Activated CD4-positive, alpha-beta memory T cell treated with anti-CD3 and anti-CD28 coated beads, Interleukin-2, amount 10 ng/mL, durations not matched to agents 7 days and 5 days (primary cell): ENCODE measurements at regions of chr1 and their contacts with region 1.

Region 1: GRCh38 chr1:148334339-148335130 is 148.6 kb downstream of the PPIAL4G start:
- DNase-seq: peak; percentile 81
- H3K4me3 Mint-ChIP-seq: peak overlapping the region; percentile 90
- H3K27ac Mint-ChIP-seq: peak overlapping the region; percentile 97
- H3K4me1 Mint-ChIP-seq: peaks cover 36% of the 10 kb centered on the region
- H3K27me3 Mint-ChIP-seq: peaks cover 47% of the 10 kb centered on the region

Region 2: DNA sequence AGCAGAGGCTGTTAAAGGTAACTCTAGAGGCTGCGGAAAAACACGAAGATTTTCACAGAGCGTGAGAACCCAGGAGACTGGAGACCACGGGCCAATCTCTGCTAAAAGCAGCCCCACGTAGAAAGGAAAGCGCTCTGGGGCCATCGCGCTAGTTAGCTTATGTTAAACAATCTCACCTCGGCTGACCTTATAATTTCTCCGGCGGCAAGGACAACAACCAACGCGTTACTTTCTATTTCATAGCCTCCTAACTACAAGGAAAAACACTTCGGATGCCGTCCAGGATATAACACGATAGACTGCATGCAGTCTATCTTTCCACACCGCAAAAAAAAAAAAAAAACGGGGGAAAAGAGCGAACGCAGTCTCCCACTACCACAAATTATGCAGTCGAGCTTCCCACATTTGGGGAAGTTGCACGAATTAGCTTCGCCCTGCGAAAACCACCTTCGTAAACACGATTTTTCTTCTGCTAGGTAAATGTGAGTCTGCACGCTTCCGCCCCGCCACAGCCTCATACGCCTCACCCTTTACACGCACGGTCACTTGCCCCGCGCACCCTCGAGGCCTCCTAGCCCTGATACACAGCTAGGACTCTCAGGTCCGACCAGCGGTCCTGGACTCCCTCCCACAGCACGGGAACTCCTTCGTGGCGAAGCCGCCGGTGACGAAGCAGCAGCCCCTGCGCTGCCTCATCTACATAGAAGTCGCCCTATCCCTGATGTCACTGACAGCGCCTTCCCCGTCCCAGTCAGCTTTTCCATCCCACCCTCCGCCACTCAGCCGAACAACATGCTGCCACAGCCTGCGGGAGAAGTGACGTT is 1250.0 kb before region 1 on chr1:
- CTCF ChIA-PET with region 1: no interaction called
- POLR2A ChIA-PET with region 1: interaction called, 10 read pairs
- DNase-seq: peak; percentile 86
- H3K4me3 Mint-ChIP-seq: peak overlapping the region; percentile 89
- H3K27ac Mint-ChIP-seq: peak overlapping the region; percentile 98
- H3K4me1 Mint-ChIP-seq: peaks cover 42% of the 10 kb centered on the region
- H3K27me3 Mint-ChIP-seq: peaks cover 57% of the 10 kb centered on the region

Region 3: GRCh38 chr1:148166568-148167492 is 167.7 kb before region 1 on chr1:
- CTCF ChIA-PET with region 1: no interaction called
- POLR2A ChIA-PET with region 1: no interaction called
- DNase-seq: no peak
- H3K4me3 Mint-ChIP-seq: no peak overlapping the region
- H3K27ac Mint-ChIP-seq: no peak overlapping the region
- H3K4me1 Mint-ChIP-seq: no peaks in the 10 kb centered on the region
- H3K27me3 Mint-ChIP-seq: peaks cover 22% of the 10 kb centered on the region

Region 4: GRCh38 chr1:148272901-148273300 is 61.6 kb before region 1 on chr1:
- CTCF ChIA-PET with region 1: no interaction called
- POLR2A ChIA-PET with region 1: interaction called, 12 read pairs
- DNase-seq: no peak
- H3K4me3 Mint-ChIP-seq: no peak overlapping the region
- H3K27ac Mint-ChIP-seq: no peak overlapping the region
- H3K4me1 Mint-ChIP-seq: no peaks in the 10 kb centered on the region
- H3K27me3 Mint-ChIP-seq: peaks cover 36% of the 10 kb centered on the region

Region 5: DNA sequence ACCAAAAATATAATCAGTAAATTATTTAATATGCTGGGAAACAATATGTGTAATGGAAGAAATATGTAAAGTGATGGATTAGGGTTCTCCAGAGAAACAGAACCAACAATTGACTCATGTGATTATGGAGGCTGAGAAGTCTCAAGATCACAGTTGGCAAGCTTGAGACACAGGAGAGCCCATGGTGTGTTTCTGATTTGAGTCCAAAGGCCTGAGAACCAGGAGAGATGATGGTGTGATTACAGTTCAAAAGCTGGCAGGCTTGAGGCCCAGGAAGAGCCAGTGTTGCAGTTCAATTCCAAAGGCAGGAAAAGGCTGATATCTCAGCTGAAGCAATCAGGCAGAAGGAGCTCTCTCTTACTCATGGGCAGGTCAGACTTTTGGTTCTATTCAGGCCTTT is 43.7 kb before region 1 on chr1:
- CTCF ChIA-PET with region 1: no interaction called
- POLR2A ChIA-PET with region 1: no interaction called
- DNase-seq: no peak
- H3K4me3 Mint-ChIP-seq: no peak overlapping the region
- H3K27ac Mint-ChIP-seq: no peak overlapping the region
- H3K4me1 Mint-ChIP-seq: no peaks in the 10 kb centered on the region
- H3K27me3 Mint-ChIP-seq: peaks cover 12% of the 10 kb centered on the region

Region 6: DNA sequence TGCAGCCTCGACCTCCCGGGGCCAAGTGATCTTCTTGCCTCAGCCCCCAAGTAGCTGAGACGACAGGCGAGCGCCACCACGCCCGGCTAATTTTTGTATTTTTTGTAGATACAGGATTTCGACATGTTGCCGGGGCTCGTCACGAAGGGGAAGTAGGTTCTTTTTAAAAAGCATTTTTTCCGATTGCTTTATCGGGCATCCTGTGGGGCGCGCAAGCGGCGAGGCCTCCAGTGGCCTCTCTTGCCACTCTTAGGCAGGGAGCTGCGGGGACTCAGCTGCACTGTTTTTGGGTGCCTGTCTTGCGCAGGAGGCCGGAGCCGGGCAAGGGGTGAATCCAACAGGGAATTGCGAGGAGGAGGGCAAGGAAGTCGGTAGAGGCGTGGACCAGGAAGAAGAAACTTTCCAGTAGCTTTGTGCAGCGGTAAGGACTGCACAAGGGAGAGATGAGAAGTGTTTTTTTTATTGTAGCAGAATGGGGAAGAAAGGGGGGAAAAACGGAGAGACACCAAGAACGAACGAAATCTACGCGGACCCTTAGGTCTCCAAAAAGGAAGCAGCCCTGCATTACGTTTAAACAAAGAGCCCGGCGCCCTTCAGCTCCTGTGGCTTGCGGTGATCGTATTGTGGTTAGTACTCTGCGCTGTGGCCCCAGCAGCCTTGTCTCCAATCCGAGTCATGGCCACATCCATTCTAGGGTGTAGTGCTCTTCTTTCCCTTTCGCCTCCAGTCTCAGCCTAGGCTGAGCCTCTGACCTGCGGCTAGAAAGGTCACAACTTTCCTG is 16.2 kb before region 1 on chr1:
- CTCF ChIA-PET with region 1: interaction called, 3 read pairs
- POLR2A ChIA-PET with region 1: interaction called, 36 read pairs
- DNase-seq: peak; percentile 85
- H3K4me3 Mint-ChIP-seq: peak overlapping the region; percentile 75
- H3K27ac Mint-ChIP-seq: peak overlapping the region; percentile 58
- H3K4me1 Mint-ChIP-seq: peaks cover 36% of the 10 kb centered on the region
- H3K27me3 Mint-ChIP-seq: peaks cover 60% of the 10 kb centered on the region

Region 7: DNA sequence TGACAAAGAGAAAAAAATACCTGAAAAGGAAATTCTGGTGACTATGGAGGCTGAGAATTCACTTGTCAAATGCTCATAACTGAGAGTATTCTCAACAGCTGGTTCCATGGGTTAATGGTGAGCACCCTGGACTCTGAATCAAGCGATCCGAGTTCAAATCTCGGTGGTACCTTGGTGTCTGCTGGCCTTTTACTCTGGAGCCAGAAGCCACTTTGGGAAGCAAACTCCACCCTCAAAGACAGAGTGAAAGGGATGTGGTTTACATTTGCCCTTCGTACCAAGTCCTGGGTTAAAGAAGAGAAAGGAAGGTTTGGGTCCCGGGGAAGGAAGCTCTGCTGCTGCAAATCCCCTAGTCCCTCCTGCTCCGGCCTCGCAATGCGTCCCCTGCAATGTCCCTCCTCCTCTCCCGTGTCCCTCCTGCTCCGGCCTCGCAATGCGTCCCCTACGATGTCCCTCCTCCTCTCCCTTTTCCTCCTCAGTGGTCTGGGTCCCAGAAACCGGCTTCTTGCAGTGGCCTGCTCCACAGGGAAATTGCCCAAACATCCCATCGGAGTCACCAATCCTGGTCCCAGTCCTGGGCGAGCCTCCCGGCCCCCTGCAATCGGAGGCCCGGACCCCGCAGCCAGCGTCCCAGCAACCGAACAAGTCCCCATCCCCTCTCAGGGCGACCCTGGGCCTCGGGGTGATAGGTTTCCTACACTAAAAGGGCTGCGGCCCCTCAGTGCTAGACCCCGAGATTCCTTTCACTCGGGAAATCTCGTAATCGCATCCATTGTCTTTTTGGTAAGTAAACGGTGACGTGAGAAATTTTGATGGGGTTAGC is 19.1 kb after region 1 on chr1:
- CTCF ChIA-PET with region 1: interaction called, 5 read pairs
- POLR2A ChIA-PET with region 1: interaction called, 13 read pairs
- DNase-seq: no peak
- H3K4me3 Mint-ChIP-seq: no peak overlapping the region
- H3K27ac Mint-ChIP-seq: no peak overlapping the region
- H3K4me1 Mint-ChIP-seq: peaks cover 5% of the 10 kb centered on the region
- H3K27me3 Mint-ChIP-seq: peaks cover 86% of the 10 kb centered on the region

Region 8: DNA sequence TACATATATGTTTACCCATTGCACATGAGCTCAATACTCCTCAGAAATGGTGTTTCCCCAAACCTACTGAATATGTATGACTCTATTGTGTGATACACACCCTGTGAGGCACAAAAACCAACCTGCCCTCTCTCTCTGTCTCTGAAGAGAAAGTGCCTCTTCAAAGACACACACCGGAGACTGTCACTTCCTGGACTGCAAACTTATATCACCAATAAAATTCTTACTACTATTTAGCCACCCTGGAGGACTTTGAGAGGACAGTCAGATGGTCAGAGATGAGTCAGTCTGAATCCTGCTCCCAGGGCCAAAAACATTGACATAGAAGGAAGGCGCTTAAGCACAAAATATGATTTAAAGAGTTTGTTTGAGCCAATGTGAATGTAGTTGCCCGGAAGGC is 38.2 kb after region 1 on chr1:
- CTCF ChIA-PET with region 1: no interaction called
- POLR2A ChIA-PET with region 1: interaction called, 20 read pairs
- DNase-seq: peak; percentile 58
- H3K4me3 Mint-ChIP-seq: peak overlapping the region; percentile 45
- H3K27ac Mint-ChIP-seq: peak overlapping the region; percentile 95
- H3K4me1 Mint-ChIP-seq: peaks cover 35% of the 10 kb centered on the region
- H3K27me3 Mint-ChIP-seq: no peaks in the 10 kb centered on the region